Mammary epithelial cell (primary cell): ENCODE measurements at regions of chr17 and their contacts with region 1.

Region 1: GRCh38 chr17:18933102-18934058 is 18.6 kb upstream of the SLC5A10 start:
- DNase-seq: no peak
- H3K4me3 ChIP-seq: no peak overlapping the region
- H3K27ac ChIP-seq: no peak overlapping the region
- H3K4me1 ChIP-seq: no peaks in the 10 kb centered on the region
- H3K27me3 ChIP-seq: no peaks in the 10 kb centered on the region
- CTCF ChIP-seq: no peak

Region 2: GRCh38 chr17:18877104-18877503 is 56.3 kb before region 1 on chr17:
- CTCF ChIA-PET with region 1: no interaction called
- dilution Hi-C with region 1: loop called (anchors 5 kb)
- in situ Hi-C with region 1: no loop called
- intact Hi-C with region 1: no loop called
- DNase-seq: peak; percentile 43
- H3K4me3 ChIP-seq: no peak overlapping the region
- H3K27ac ChIP-seq: peak overlapping the region; percentile 20
- H3K4me1 ChIP-seq: peaks cover 15% of the 10 kb centered on the region
- H3K27me3 ChIP-seq: no peaks in the 10 kb centered on the region
- CTCF ChIP-seq: no peak

Region 3: GRCh38 chr17:18889658-18890057 is 43.7 kb before region 1 on chr17:
- CTCF ChIA-PET with region 1: no interaction called
- dilution Hi-C with region 1: no loop called
- in situ Hi-C with region 1: no loop called
- intact Hi-C with region 1: no loop called
- DNase-seq: no peak
- H3K4me3 ChIP-seq: no peak overlapping the region
- H3K27ac ChIP-seq: no peak overlapping the region
- H3K4me1 ChIP-seq: no peaks in the 10 kb centered on the region
- H3K27me3 ChIP-seq: no peaks in the 10 kb centered on the region
- CTCF ChIP-seq: no peak

Region 4: DNA sequence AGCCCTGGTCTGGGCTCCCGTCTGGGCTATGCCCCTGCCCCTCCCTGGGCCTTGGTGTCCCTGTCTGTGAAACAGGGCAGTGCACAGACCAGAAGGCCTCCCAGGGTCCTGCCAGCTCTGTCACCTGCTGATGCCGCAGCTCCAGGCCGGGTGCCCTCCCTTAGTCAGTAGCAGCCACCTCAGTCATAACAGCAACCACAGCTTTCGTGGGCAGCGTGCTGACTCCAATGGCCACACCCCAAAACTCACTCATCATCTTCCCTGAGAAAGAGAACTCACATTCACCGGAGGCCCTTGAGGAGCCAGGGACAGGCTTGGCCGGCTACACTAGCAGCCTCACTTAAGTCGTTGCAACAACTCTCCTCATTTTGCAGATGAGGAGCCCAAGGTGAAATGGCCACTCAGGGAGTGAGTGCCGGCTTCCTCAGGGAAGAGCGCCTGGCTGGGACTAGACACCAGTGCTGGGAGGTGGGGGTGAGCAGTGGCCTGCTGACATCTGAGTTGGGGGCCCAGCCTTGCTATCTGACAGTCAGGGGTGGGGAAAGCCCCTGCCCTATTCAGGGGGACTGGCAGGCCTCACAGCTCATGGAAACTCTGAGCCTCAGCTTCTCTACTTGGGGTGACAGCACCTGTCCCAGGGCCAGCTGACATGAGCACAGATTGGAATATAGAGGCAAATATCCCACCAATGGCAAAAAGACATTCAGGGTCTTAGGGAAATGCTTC is 41.2 kb after region 1 on chr17:
- CTCF ChIA-PET with region 1: no interaction called
- dilution Hi-C with region 1: loop called (anchors 5 kb)
- in situ Hi-C with region 1: no loop called
- intact Hi-C with region 1: no loop called
- DNase-seq: peak; percentile 56
- H3K4me3 ChIP-seq: no peak overlapping the region
- H3K27ac ChIP-seq: no peak overlapping the region
- H3K4me1 ChIP-seq: peaks cover 11% of the 10 kb centered on the region
- H3K27me3 ChIP-seq: no peaks in the 10 kb centered on the region
- CTCF ChIP-seq: no peak

Region 5: GRCh38 chr17:19024101-19025078 is 91.0 kb after region 1 on chr17:
- CTCF ChIA-PET with region 1: no interaction called
- dilution Hi-C with region 1: no loop called
- in situ Hi-C with region 1: no loop called
- intact Hi-C with region 1: no loop called
- DNase-seq: peak; percentile 74
- H3K4me3 ChIP-seq: no peak overlapping the region
- H3K27ac ChIP-seq: no peak overlapping the region
- H3K4me1 ChIP-seq: no peaks in the 10 kb centered on the region
- H3K27me3 ChIP-seq: no peaks in the 10 kb centered on the region
- CTCF ChIP-seq: no peak